ENCODE measurements at regions of chr20 and their contacts with region 1.

Region 1: DNA sequence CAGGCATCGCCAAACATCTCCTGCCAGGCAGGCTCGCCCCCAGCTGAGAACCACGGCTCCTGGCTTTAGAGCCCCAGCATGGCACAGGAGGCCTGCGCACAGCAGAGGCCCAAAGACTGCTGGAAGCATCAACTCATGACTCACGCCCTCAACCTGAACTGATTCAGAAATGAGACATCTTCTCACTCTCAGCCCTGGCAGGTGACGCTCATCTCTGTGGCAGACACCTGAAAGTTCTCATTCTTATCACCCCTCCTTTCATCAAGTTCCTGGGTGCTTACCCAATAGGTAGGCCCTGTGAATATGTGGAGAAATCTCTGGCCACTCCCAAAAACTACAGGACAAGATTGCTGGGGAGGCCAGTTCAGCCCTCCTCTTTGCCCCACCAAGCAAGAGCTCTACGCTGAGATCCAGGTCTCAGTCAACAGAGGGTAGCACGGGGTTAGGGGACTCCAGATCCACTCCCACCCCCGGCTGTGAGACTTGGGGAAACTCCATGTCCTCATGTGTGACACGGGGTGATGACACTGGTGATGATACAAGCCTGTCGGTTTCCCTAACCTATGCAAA is 11.3 kb downstream of the NFATC2 start:
- DNase-seq: peak; percentile 92
- ATAC-seq: peak; percentile 80
- H3K4me3 Mint-ChIP-seq: peak overlapping the region; percentile 74
- H3K27ac Mint-ChIP-seq: peak overlapping the region; percentile 99
- H3K4me1 Mint-ChIP-seq: peaks cover 91% of the 10 kb centered on the region
- H3K27me3 Mint-ChIP-seq: no peaks in the 10 kb centered on the region
- CTCF ChIP-seq: no peak

Region 2: DNA sequence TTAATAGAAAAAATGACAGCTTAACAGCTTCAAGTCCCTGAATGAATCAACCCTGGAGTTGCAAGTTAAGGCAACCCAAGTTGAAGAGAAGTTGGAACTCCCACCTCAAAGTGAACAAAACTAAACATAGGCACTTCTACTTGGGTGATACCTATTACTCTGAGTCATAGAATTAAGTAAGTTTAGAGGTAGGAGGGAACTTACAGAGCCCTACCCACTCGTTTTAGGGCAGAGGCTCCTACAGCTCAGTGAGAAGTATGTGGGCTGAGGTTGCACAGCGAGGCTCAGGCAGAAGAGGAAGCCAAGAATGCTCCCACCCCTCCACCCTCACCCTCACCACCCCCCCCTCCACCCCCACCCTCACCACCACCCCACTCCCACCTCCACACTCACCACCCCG is 30.9 kb before region 1 on chr20:
- CTCF ChIA-PET with region 1: interaction called, 6 read pairs
- POLR2A ChIA-PET with region 1: interaction called, 142 read pairs
- intact Hi-C with region 1: loop called (anchors 2 kb)
- DNase-seq: peak; percentile 79
- ATAC-seq: peak; percentile 82
- H3K4me3 Mint-ChIP-seq: no peak overlapping the region
- H3K27ac Mint-ChIP-seq: peak overlapping the region; percentile 92
- H3K4me1 Mint-ChIP-seq: peaks cover 82% of the 10 kb centered on the region
- H3K27me3 Mint-ChIP-seq: no peaks in the 10 kb centered on the region
- CTCF ChIP-seq: no peak

Region 3: GRCh38 chr20:51565745-51566144 is 34.5 kb after region 1 on chr20:
- CTCF ChIA-PET with region 1: no interaction called
- POLR2A ChIA-PET with region 1: no interaction called
- intact Hi-C with region 1: no loop called
- DNase-seq: no peak
- ATAC-seq: no peak
- H3K4me3 Mint-ChIP-seq: no peak overlapping the region
- H3K27ac Mint-ChIP-seq: no peak overlapping the region
- H3K4me1 Mint-ChIP-seq: peaks cover 23% of the 10 kb centered on the region
- H3K27me3 Mint-ChIP-seq: peaks cover 40% of the 10 kb centered on the region
- CTCF ChIP-seq: no peak